Heart right ventricle (tissue), 16 donors: ENCODE measurements at regions of chr17 and their contacts with region 1.

Region 1: GRCh38 chr17:51845776-51846175 is 312.7 kb downstream of the CA10 start:
- DNase-seq: no peak
- ATAC-seq: no peak
- H3K4me3 ChIP-seq: no peak overlapping the region
- H3K27ac ChIP-seq: no peak overlapping the region
- H3K4me1 ChIP-seq: no peaks in the 10 kb centered on the region
- H3K27me3 ChIP-seq: peaks cover 0 to 44% (median 4%) of the 10 kb centered on the region in 7 donors
- CTCF ChIP-seq: no peak

Region 2: GRCh38 chr17:51778842-51779241 is 66.9 kb before region 1 on chr17:
- intact Hi-C with region 1: no loop called
- DNase-seq: no peak
- ATAC-seq: no peak
- H3K4me3 ChIP-seq: no peak overlapping the region
- H3K27ac ChIP-seq: no peak overlapping the region
- H3K4me1 ChIP-seq: no peaks in the 10 kb centered on the region
- H3K27me3 ChIP-seq: peaks cover 0 to 9% (median 0%) of the 10 kb centered on the region in 7 donors
- CTCF ChIP-seq: no peak

Region 3: DNA sequence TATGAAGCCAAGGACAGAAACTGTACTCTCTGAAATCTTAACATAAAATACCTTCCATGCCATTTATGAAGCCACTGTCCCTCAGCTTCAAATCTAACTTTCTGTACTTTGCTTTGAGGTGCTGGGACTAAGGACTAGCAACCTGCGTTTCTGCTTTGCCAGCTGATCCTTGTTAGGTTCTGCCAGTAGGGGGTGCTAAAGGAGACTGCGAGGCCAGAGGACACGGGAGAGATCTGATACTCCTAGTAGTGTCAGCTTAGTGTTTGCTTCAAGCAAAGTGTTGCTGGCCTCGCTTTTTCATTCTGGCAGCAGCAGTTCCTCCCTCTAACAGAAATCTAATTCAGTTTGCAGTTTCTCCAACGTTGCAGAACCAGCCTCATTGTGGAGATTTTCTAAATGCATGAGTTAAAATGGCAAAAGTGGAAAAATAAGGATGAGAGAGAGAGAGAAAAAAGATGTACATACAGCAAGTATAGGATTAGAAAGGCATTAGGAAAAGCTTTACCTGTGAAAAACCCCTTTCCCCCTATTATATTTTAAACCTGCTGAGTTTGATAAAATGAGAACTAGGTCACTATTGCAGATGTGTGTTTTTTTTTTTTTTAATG is 15.3 kb after region 1 on chr17:
- intact Hi-C with region 1: loop called in 1 of 10 experiments (anchors 2 kb)
- DNase-seq: no peak
- ATAC-seq: no peak
- H3K4me3 ChIP-seq: no peak overlapping the region
- H3K27ac ChIP-seq: no peak overlapping the region
- H3K4me1 ChIP-seq: no peaks in the 10 kb centered on the region
- H3K27me3 ChIP-seq: peaks cover 0 to 11% (median 0%) of the 10 kb centered on the region in 7 donors
- CTCF ChIP-seq: peak in 7 of 9 donors; percentile 13 to 53 (median 41)